H1 (cell line): ENCODE measurements at regions of chr3 and their contacts with region 1.

Region 1: DNA sequence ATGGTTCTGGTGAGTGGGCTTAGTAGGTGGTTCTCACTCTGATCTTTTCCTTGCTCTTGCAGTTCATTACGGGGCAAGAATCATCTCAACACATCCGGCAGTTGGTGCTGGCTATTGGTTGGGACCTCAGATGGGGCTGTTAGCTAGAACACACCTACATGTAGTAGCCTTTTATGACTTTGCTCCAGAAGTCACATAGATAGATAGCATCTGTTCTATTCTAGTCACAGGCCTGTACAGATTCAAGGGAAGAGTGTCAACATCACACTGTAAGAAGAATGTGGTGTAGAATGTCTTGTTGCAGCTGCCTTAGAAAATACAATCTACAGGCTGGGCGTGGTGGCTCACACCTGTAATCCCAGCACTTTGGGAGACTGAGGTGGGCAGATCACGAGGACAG is 15.1 kb downstream of the RAB5A start:
- DNase-seq: no peak
- H3K4me3 ChIP-seq: no peak overlapping the region
- H3K27ac ChIP-seq: no peak overlapping the region
- H3K4me1 ChIP-seq: no peaks in the 10 kb centered on the region
- H3K27me3 ChIP-seq: no peaks in the 10 kb centered on the region
- CTCF ChIP-seq: no peak
- EP300 ChIP-seq: no peak
- POLR2A ChIP-seq: no peak
- RAD21 ChIP-seq: no peak

Region 2: DNA sequence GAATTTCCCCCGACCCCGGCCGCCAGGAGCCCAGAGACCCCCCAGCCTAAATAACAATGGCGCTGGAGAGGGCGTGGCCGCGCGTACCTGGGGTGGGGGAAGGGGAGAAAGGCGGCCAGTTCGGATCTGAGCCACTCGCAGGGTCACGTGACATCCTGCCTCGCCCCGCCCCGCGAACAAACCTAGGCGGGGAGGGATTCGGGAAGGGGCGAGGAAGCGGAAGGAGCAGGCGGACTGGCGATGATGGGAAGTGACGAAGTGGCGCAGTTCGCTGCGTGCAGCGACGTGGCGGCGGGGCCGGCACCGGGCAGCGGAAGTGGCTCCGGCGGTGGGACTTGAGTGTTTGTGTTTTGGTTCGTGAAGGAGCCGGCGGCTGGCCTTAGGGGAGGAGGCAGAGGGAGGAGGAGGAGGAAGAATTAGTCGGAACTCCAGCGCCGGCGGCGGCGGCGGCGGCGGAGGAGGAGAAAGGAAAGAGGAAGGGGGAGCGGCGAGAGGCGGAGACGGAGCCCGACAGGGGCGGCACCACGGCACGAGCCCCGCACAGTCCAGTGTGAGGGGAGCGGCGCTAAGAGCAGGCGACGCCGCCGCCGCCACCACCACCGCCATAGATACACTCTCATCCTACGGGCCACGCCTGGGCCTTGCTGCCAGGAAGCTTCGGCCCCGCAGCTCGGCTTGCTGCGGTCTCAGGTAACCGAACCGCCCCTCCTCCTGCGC is 15.0 kb before region 1 on chr3 and contains the start of gene RAB5A:
- CTCF ChIA-PET with region 1: no interaction called
- POLR2A ChIA-PET with region 1: interaction called, 13 read pairs
- DNase-seq: peak; percentile 95 to 96
- H3K4me3 ChIP-seq: peak within 1 kb of the TSS; percentile 95 to 99 (median 96)
- H3K27ac ChIP-seq: peak within 1 kb of the TSS; percentile 92
- H3K4me1 ChIP-seq: peaks cover 3 to 5% (median 5%) of the 10 kb centered on the region in 4 experiments
- H3K27me3 ChIP-seq: no peaks in the 10 kb centered on the region
- CTCF ChIP-seq: no peak
- EP300 ChIP-seq: peak in 1 of 2 experiments; percentile 38; a peak in 2 of 3 replicates
- POLR2A ChIP-seq: peak; percentile 72 to 74; a peak in 2 of 3 replicates
- RAD21 ChIP-seq: peak in 1 of 2 experiments; percentile 0; a peak in 2 of 4 replicates
- total RNA-seq, gene RAB5A: 77.7 and 86.6 TPM in 2 replicates

Region 3: DNA sequence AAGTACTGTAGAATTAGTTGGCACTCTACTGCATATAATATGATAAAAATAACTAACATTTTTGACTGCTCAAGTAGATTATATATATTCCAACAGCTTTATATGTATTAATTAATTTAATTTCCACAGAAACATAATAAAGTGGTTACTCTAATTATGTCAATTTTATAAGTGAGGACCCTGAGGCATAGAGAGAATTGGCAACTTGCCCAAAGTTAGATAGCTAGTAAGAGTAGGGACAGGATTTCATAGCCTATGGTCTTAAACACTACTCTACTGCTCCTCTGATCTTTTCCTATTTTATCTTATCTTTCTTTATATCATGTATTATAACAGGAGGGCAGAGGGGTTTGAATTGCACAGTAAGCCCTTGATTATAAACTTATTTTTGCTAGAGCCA is 642.7 kb after region 1 on chr3:
- CTCF ChIA-PET with region 1: no interaction called
- POLR2A ChIA-PET with region 1: no interaction called
- DNase-seq: no peak
- H3K4me3 ChIP-seq: no peak overlapping the region
- H3K27ac ChIP-seq: no peak overlapping the region
- H3K4me1 ChIP-seq: 0 out of 7 replicates have a peak, but pooled peaks cover 0 to 2% (median 0%) of the 10 kb centered on the region in 4 experiments
- H3K27me3 ChIP-seq: no peaks in the 10 kb centered on the region
- CTCF ChIP-seq: no peak
- EP300 ChIP-seq: no peak
- POLR2A ChIP-seq: no peak
- RAD21 ChIP-seq: no peak